ENCODE measurements at regions of chr7 and their contacts with region 1.

Region 1: GRCh38 chr7:130560970-130561369 is 69.1 kb downstream of the MEST start:
- DNase-seq: peak; percentile 15 to 55
- H3K4me3 ChIP-seq: no peak overlapping the region
- H3K27ac ChIP-seq: no peak overlapping the region
- H3K4me1 ChIP-seq: no peaks in the 10 kb centered on the region
- H3K27me3 ChIP-seq: no peaks in the 10 kb centered on the region
- CTCF ChIP-seq: peak; percentile 77

Region 2: GRCh38 chr7:129252128-129252527 is 1308.8 kb before region 1 on chr7:
- CTCF ChIA-PET with region 1: no interaction called
- POLR2A ChIA-PET with region 1: interaction called, 19 read pairs
- intact Hi-C with region 1: no loop called
- DNase-seq: no peak
- H3K4me3 ChIP-seq: no peak overlapping the region
- H3K27ac ChIP-seq: no peak overlapping the region
- H3K4me1 ChIP-seq: no peaks in the 10 kb centered on the region
- H3K27me3 ChIP-seq: no peaks in the 10 kb centered on the region
- CTCF ChIP-seq: no peak

Region 3: GRCh38 chr7:130182990-130183389 is 378.0 kb before region 1 on chr7:
- CTCF ChIA-PET with region 1: no interaction called
- POLR2A ChIA-PET with region 1: no interaction called
- intact Hi-C with region 1: loop called (anchors 5 kb)
- DNase-seq: no peak
- H3K4me3 ChIP-seq: no peak overlapping the region
- H3K27ac ChIP-seq: no peak overlapping the region
- H3K4me1 ChIP-seq: no peaks in the 10 kb centered on the region
- H3K27me3 ChIP-seq: no peaks in the 10 kb centered on the region
- CTCF ChIP-seq: no peak

Region 4: DNA sequence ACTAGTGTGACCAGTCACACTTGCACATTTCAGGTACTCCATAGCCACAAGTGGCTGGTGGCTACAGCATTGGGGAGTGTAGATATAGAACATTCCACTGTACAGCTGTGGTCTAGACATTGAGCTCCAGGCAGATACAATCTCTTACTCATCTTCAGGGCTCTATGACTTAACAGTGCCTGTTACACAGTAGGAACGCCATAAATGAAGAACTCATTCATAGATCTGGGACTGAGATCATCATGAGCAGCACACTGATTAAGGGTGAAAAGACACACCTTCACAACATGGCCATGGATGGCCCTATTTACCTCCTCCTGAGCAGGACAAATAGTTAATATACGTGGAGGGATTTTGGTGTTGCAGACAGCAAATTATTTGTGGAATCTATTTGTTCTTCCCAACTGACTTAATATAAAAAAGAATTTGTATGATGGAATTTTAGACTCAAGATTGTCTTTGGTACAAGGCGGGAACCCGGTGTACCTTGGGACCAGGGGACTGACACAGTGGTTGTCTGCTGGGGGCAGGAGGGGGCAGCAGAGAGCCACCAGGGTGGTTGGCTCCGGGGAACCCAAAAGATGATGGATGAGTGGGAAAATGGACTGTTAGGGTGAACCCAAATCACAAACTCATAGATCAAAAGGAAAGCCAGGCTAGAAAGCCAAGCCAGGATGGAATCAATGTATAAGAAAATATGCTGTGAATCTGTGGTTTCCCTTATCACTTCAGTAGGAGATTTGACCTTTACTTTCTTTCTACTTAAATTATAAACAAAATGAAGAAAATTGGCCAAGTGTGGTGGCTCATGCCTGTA is 318.6 kb before region 1 on chr7:
- CTCF ChIA-PET with region 1: no interaction called
- POLR2A ChIA-PET with region 1: no interaction called
- intact Hi-C with region 1: loop called (anchors 1 kb)
- DNase-seq: peak; percentile 38 to 48
- H3K4me3 ChIP-seq: no peak overlapping the region
- H3K27ac ChIP-seq: no peak overlapping the region
- H3K4me1 ChIP-seq: no peaks in the 10 kb centered on the region
- H3K27me3 ChIP-seq: no peaks in the 10 kb centered on the region
- CTCF ChIP-seq: peak; percentile 95